Body of pancreas (tissue), 4 donors: ENCODE measurements at regions of chr7 and their contacts with region 1.

Region 1: DNA sequence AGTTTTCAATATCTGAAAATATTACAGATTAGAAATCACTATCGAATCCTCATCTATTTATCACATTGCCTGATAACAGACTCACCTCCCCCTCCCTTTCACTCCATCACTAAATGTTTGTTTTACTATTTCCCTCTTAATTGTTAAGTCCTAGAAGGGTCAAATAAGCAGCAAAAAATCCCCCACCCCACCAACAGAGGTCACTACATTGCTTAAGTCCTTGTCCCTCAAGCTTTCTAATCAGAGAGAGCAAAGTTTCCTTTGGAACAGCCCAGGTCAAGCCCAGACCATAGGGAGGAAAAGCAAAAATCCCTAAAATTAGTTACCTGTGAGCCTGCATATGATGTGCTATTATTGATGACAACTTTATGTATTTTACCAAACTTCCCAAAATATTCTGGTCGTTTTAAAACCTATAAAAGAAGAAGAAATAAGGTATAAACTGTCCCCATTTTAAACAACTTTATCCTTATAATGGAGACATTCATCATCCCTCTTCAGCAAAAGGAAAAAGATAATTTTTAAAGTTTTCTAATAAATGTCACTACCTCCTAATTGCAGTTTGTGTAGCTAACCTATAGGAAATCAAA is 95.0 kb downstream of the CNOT4 start:
- DNase-seq: peak; percentile 35 to 75 (median 60)
- ATAC-seq: no peak
- H3K4me3 ChIP-seq: no peak overlapping the region
- H3K27ac ChIP-seq: no peak overlapping the region
- H3K4me1 ChIP-seq: no peaks in the 10 kb centered on the region
- H3K27me3 ChIP-seq: no peaks in the 10 kb centered on the region
- CTCF ChIP-seq: peak; percentile 15 to 61 (median 47)
- POLR2A ChIP-seq: no peak

Region 2: DNA sequence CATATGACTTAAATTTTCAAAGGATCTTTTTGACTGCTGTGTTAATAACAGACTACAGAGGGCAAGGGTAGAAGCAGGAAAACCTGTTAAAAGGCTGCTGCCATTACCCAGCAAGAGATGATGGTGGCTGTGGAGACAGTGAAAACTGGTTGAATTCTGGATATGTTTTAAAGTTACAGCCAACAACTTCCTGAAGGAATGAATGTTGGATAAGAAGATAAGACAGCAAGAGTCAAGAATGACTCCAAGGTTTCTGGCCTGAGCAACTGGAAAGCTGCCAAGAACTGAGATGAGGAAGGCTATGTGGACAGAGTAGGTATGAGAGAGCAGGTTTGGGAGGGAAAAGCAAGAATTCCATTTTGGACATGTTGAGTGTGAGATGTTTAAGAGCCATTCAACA is 75.8 kb after region 1 on chr7:
- intact Hi-C with region 1: loop called (anchors 10 kb)
- DNase-seq: peak; percentile 44 to 55 (median 48)
- ATAC-seq: peak; percentile 64
- H3K4me3 ChIP-seq: no peak overlapping the region
- H3K27ac ChIP-seq: no peak overlapping the region
- H3K4me1 ChIP-seq: peaks cover 24% of the 10 kb centered on the region
- H3K27me3 ChIP-seq: no peaks in the 10 kb centered on the region
- CTCF ChIP-seq: no peak
- POLR2A ChIP-seq: no peak